Posterior vena cava (tissue), 2 donors: ENCODE measurements at regions of chr4 and their contacts with region 1.

Region 1: GRCh38 chr4:94127707-94128328 is 79.8 kb upstream of the SMARCAD1 start:
- DNase-seq: no peak

Region 2: DNA sequence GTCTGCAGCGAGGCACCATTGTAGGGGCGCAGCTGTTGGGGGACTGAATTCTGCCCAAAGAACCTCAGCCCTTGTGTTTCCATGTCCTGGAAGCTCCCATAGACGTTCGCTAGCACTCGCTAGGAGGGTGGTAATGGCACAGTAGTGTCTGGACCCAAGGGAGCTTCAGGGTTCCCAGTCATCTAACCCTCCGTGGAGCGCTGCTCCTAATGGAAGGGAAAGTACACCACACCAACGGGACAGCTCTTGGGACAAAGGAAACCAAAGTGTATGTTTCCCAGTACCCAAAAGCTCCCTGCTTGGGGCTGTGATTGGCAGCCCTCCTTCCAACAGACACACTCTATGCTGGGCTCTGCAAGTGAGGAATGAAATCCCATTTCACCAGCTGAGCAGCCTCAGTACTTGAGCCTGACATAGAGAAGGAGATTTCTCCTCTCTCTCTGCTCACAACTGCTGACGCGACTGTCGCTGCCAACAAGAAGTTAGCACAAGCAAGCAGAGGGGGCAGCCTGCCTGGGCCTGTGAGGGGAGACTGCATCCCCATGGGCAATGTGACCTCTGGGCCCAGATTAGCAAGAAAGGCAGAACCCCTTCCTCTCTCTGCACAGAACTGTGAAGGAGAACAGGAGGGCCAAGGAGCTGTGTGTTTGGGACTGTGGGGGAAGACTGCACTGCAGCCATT is 12.3 kb after region 1 on chr4:
- intact Hi-C with region 1: loop called in 1 of 2 experiments (anchors 1 kb)
- DNase-seq: no peak

Region 3: GRCh38 chr4:94995684-94996394 is 868.0 kb after region 1 on chr4:
- intact Hi-C with region 1: loop called in 1 of 2 experiments (anchors 5 kb)
- DNase-seq: no peak